Caco-2 (cell line): ENCODE measurements at regions of chrX and their contacts with region 1.

Region 1: DNA sequence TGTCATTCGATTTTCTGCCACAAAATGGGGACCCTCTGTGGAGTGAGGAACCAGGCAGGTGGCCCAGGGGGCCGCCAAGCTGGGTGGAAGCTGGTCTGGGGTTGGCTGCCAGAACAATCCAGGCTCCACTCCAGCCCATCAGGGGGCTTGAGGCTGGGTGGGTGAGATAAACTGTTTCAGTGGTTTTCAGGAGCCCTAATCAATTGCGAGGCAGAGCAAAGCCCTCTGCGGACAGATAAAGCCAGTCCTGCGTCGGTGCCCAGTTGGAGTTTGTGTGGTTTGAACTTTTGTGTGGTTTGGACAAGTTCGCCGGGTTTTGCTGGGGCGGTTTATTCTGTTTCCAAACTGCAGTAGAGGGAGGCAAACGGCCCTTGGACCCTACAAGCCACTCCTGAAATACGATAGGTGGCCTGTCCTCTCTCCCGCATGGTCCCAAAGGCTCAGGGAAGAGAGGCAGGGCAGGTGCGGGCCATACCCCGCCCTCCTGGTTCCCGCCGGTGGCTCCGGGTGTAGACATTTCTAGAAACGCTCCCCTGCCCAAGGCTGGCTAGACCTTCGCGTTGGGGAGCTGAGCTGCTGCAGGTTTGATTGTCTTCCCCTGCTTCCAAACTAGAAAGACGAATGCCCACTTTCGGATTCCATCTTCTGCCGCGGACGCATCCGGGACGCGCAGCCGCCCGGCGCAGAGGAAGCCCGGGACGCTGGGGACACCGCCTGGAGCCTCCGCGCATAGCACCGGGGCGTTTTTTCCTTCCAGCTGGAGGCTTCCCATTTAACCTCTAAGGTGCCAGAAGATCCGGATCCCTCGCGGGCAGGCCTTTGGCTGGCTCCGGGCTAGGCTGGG is 169.0 kb upstream of the BCOR start:
- DNase-seq: peak; percentile 64 to 76
- H3K4me3 ChIP-seq: peak overlapping the region; percentile 52
- H3K4me3 Mint-ChIP-seq: peak overlapping the region; percentile 63
- H3K27ac Mint-ChIP-seq: peak overlapping the region; percentile 34
- H3K4me1 ChIP-seq: peaks cover 16% of the 10 kb centered on the region; the same call in 1 of the 2 replicates
- H3K4me1 Mint-ChIP-seq: no peaks in the 10 kb centered on the region
- H3K27me3 ChIP-seq: no peaks in the 10 kb centered on the region
- H3K27me3 Mint-ChIP-seq: no peaks in the 10 kb centered on the region
- CTCF ChIP-seq: peak; percentile 49 to 67

Region 2: DNA sequence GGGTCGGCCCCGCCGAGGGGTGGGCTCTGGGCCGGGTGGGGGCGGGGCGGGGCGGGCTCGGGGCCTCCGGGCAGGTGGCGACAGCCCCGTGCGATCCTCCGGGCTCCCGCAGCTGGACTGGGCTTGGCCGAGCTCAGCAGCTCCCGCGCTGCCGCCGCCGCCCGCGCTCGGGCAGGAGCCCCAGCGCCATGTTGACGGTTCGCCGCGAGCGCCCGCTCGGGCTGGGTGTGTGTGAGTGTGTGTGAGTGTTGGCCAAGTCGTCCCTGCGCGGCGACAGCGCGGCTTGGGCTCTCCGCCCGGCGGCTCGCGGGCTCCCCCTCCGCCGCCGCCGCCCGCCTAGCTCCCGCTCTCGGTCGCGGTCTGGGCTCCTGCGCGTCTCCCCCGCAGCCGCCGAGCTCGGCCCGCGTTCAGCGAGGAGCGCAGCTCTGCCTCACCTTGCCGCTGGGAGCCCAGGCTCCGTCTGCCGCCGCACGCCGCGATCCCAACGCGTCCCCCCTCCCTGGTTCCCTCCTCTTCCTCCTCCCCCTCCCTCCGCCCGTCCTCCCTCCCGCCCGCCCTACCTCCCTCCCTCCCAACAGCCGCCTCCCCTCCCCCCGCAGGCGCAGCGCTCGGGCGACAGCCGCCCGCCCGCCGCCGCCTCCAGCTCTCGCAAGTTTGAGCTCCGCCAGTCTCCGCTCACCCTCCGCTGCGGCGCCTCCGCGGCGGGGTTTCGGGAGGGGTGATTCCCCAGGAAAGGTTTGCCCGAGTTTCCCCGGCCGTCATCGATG is 169.0 kb before region 1 on chrX and contains the start of gene BCOR:
- CTCF ChIA-PET with region 1: no interaction called
- POLR2A ChIA-PET with region 1: interaction called, 5 read pairs
- intact Hi-C with region 1: loop called (anchors 5 kb)
- DNase-seq: peak; percentile 63 to 65
- H3K4me3 ChIP-seq: peak within 1 kb of the TSS; percentile 55
- H3K4me3 Mint-ChIP-seq: peak within 1 kb of the TSS; percentile 83
- H3K27ac Mint-ChIP-seq: no peak within 1 kb of the TSS
- H3K4me1 ChIP-seq: 0 out of 2 replicates have a peak, but pooled peaks cover 7% of the 10 kb centered on the region
- H3K4me1 Mint-ChIP-seq: peaks cover 9% of the 10 kb centered on the region
- H3K27me3 ChIP-seq: no peaks in the 10 kb centered on the region
- H3K27me3 Mint-ChIP-seq: no peaks in the 10 kb centered on the region
- CTCF ChIP-seq: no peak
- total RNA-seq, gene BCOR: 16.2 and 18.6 TPM in 2 replicates

Region 3: DNA sequence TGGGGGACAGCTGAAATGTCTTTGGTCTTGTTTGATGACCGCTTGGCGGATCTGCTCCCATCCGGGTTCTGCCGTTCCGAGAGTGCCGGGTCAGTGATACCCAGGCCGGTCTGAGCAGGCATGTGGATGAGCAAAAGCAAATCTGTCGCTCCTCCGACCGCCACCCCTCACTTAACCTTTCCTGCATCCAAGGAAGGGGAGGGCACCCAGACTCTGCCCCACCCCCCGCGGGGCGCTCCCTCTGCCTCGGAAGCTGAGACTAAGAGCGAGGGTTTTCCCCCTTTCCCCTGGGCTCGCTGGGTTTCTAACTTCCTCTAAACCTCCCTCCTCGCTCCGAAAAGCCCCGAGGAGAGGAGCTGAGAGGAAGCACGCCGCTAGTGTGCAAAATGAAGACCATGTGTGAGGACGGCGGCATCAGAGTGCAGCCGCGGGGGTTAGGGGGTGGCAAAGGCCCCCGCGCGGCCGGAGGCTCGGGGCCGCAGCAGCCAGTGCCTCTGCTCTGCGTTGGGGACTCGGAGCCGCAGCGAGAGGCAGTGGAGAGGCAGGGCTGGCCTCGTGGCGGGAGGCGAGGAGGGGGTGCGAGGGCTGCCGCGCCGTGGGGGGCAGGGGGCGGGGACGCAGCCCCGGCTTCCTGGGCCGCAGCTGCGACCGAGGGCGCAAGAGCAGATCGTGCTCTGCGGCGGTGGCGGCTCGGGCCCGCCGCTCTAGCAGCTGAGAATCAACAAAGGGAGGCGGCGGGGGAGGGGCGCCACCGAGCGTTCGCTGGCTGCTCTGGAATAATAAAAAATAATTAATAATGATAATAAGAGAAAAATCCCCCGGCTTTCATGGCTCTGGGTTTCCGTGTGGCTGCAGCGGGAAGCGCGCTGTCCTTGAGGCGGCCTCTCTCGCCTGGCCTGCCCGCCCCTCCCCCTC is 113.1 kb before region 1 on chrX:
- CTCF ChIA-PET with region 1: no interaction called
- POLR2A ChIA-PET with region 1: no interaction called
- intact Hi-C with region 1: no loop called
- DNase-seq: peak in 1 of 2 experiments; percentile 40
- H3K4me3 ChIP-seq: peak overlapping the region; percentile 41
- H3K4me3 Mint-ChIP-seq: peak overlapping the region; percentile 79
- H3K27ac Mint-ChIP-seq: no peak overlapping the region
- H3K4me1 ChIP-seq: 0 out of 2 replicates have a peak, but pooled peaks cover 6% of the 10 kb centered on the region
- H3K4me1 Mint-ChIP-seq: no peaks in the 10 kb centered on the region
- H3K27me3 ChIP-seq: no peaks in the 10 kb centered on the region
- H3K27me3 Mint-ChIP-seq: no peaks in the 10 kb centered on the region
- CTCF ChIP-seq: no peak

Region 4: DNA sequence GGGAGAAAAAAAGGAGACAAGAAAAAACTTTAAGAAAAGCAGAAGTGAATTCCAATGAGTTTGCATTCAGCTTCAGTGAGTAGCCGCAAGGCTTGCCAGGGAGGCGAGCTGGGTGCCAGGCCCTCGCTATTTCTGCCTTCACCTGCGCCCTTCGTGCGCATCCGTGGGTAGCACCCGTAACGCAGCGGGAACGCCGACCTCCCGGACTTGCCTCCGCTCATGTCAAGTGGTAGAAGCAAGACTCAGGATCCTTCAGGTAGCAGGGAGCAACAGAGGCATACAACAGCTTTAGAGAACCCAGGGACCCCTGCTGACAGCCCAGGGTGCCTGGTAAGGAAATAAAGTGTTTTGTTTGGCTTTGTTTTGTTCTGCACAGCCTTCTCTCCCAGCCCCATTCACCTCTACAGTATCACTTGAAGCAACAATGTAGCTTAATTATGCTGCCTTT is 29.0 kb before region 1 on chrX:
- CTCF ChIA-PET with region 1: no interaction called
- POLR2A ChIA-PET with region 1: no interaction called
- intact Hi-C with region 1: no loop called
- DNase-seq: no peak
- H3K4me3 ChIP-seq: no peak overlapping the region
- H3K4me3 Mint-ChIP-seq: no peak overlapping the region
- H3K27ac Mint-ChIP-seq: no peak overlapping the region
- H3K4me1 ChIP-seq: no peaks in the 10 kb centered on the region
- H3K4me1 Mint-ChIP-seq: no peaks in the 10 kb centered on the region
- H3K27me3 ChIP-seq: no peaks in the 10 kb centered on the region
- H3K27me3 Mint-ChIP-seq: no peaks in the 10 kb centered on the region
- CTCF ChIP-seq: no peak